ENCODE measurements at regions of chr4 and their contacts with region 1.

Region 1: GRCh38 chr4:152032722-152033131 is 271.9 kb upstream of the GATB start:
- DNase-seq: no peak

Region 2: DNA sequence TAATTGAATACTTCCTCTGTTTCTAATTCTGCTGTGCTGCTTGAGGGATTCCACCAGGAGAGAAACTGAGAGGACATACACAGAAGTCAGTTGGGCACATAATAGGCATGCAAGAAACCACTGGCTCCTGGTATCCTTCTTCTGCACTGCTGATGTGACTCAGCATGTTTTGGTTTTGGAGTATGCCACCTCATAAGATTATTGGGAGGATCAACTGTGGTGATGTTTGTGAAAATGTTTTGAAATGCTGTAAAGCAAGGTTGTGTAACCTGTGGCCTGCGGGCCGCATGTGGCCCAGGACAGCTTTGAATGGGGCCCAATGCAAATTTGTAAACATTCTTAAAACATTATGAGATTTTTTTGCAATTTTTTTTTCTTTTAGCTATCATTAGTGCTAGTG is 391.6 kb before region 1 on chr4:
- intact Hi-C with region 1: no loop called
- DNase-seq: no peak

Region 3: DNA sequence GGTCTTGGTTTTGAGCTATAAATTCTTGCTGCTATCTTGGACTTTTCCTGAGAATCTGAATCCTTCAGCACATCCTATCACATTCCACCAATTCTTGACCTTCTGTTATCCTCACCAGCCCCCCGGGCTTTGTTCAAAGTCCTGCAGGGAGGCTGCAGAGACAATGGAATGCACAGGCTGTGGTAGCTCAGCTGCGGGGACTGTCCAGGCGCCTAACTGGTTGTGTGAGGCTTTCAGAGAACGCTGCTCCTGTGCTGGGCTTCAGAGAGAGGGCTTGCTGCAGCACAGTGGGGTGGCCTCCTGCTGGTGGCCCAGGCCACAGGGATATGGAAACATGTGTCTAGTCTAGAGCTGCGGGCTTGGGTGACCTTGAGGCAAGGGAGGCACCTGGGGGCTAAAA is 75.6 kb before region 1 on chr4:
- intact Hi-C with region 1: loop called (anchors 5 kb)
- DNase-seq: no peak

Region 4: DNA sequence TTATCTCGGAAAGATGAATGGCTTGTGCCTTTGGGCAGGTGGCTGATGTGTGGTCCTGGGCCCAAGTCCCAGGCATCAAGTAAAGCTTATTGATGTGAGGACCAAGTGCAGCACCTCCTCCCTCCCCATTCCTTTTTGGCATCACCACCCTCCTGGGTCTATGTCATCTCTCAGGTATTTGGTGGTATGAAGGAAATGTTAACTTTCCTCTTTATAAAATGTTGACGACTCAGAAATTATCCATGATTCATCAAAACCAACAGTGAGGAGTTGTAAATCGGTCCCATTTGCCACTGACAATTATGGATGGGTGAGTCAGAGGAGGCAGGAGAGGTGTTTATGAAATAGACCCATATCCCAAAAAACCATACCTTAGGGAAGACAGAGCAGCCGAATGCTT is 42.5 kb before region 1 on chr4:
- intact Hi-C with region 1: no loop called
- DNase-seq: no peak

Region 5: GRCh38 chr4:152166567-152166966 is 133.8 kb after region 1 on chr4:
- intact Hi-C with region 1: no loop called
- DNase-seq: no peak